MCF 10A (cell line): ENCODE measurements at regions of chr6 and their contacts with region 1.

Region 1: DNA sequence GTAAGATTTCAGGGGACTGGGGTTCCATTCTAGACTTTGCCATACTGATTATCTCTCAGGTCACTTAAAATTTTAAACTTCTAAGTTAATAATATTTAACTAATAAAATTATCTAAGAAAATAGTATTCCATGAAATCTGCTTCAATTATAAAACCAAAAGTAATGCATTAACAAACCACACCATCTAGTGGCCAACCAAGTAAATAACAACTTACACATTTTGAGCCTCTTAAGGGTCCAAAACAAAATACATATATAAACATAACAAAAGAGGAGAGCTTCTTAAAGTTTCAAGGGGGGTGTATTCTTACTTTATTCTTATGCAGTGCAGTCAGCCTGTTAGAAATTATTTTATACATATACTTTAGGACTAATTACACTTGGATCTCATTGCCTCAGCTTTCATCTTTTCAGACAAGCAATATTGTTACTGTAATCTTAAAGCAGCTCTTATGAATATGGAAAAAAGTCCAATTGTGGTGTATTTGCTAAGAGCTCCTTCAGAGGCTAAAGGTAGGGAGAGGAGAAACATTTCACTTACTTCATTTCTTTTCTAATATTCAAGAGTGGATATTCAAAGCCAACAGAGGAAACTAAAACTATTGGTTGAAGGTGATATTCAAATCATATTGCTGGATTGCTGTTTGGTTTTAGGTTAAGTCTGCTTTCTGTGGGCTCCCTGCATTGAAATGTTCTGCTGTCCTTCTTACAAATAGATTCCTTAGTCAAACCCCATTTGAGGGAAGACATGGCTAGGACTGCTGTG is 199.7 kb upstream of the SIM1 start:
- DNase-seq: peak; percentile 44
- H3K4me3 Mint-ChIP-seq: no peak overlapping the region
- H3K27ac Mint-ChIP-seq: no peak overlapping the region
- H3K4me1 Mint-ChIP-seq: peaks cover 11% of the 10 kb centered on the region
- H3K27me3 Mint-ChIP-seq: no peaks in the 10 kb centered on the region
- CTCF ChIP-seq: peak; percentile 50

Region 2: DNA sequence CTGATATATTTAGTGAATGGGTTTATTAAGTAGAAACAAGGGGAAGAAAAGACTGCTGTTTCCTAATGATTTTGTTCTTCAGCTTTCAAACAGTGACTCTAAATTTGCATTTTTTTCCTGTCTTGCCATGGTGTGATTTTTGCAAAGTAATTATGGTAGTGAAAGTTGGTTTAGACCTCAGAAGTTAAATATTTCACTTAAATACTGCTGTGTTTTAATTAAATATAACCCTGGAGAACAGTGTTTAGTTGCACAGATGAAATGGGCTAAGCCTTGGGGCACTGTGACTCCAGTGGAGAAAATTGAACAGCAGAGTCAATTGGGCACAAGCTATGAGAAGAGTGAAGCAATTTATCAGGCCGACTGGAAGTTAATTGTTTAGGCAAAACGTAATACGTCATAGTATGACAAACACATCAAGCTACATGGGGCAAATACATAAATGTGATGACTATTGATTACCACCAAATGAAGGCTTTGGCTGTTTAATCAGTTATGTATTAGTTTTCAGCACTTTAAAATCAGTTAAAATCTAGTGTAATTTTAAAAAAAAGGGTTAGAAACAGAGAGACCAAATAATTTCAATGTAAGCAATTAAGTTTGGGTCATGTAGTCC is 559.2 kb before region 1 on chr6:
- CTCF ChIA-PET with region 1: interaction called, 33 read pairs
- POLR2A ChIA-PET with region 1: no interaction called
- intact Hi-C with region 1: no loop called
- DNase-seq: no peak
- H3K4me3 Mint-ChIP-seq: no peak overlapping the region
- H3K27ac Mint-ChIP-seq: no peak overlapping the region
- H3K4me1 Mint-ChIP-seq: peaks cover 5% of the 10 kb centered on the region
- H3K27me3 Mint-ChIP-seq: no peaks in the 10 kb centered on the region
- CTCF ChIP-seq: no peak

Region 3: DNA sequence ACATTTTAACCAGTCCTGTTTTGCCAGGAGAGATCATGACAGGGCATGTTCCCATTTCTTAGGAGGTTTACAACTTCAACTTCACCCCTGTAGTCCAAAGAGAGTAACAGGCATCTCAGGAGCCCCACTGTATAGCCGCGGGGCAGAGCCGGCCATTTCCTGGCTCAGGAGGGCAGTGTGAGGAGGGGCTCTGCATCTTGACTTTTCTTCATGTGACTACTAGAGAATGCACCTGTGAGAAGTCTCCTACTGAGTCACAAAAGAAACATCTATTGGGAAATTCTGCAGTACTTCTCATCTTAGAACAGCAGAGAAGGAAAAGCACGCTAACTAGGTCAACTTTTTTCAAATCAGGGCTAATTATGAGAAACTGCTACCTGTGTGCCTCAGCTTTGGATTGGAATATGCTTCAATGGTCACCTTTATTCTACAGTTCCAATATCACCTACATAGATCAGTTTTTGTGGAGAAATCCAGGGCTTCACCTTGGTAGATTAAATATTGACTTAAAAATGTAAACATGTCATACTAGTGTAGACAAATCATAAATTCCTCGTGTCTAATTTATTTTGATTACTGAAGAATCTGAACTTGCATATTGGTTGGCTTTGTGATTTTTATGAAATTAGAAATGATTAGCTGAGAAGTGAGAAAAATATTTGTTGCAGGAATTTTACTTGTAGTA is 171.1 kb before region 1 on chr6:
- CTCF ChIA-PET with region 1: no interaction called
- POLR2A ChIA-PET with region 1: no interaction called
- intact Hi-C with region 1: loop called (anchors 5 kb)
- DNase-seq: peak; percentile 61
- H3K4me3 Mint-ChIP-seq: peak overlapping the region; percentile 7
- H3K27ac Mint-ChIP-seq: peak overlapping the region; percentile 84
- H3K4me1 Mint-ChIP-seq: peaks cover 11% of the 10 kb centered on the region
- H3K27me3 Mint-ChIP-seq: no peaks in the 10 kb centered on the region
- CTCF ChIP-seq: no peak

Region 4: DNA sequence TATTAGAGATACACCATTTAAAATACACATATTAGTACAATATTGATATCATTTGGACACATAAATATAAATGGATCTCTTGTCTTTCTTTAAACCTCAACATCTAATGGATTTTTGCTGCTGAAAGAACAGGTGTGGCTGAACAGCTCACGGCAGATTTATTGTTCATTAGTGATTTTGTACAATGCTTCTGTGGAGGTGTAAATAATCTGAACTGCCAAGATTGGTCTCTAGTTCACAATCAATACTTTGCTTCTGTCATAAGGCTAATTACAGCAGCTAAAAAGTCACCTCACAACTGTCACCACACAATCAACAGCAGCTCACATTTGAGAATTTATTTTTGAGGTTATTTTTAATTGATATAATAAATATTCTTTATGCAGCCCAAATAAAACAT is 37.7 kb before region 1 on chr6:
- CTCF ChIA-PET with region 1: interaction called, 10 read pairs
- POLR2A ChIA-PET with region 1: no interaction called
- intact Hi-C with region 1: no loop called
- DNase-seq: no peak
- H3K4me3 Mint-ChIP-seq: no peak overlapping the region
- H3K27ac Mint-ChIP-seq: no peak overlapping the region
- H3K4me1 Mint-ChIP-seq: peaks cover 5% of the 10 kb centered on the region
- H3K27me3 Mint-ChIP-seq: no peaks in the 10 kb centered on the region
- CTCF ChIP-seq: no peak

Region 5: GRCh38 chr6:100704961-100705360 is 40.5 kb after region 1 on chr6:
- CTCF ChIA-PET with region 1: no interaction called
- POLR2A ChIA-PET with region 1: no interaction called
- intact Hi-C with region 1: no loop called
- DNase-seq: no peak
- H3K4me3 Mint-ChIP-seq: no peak overlapping the region
- H3K27ac Mint-ChIP-seq: no peak overlapping the region
- H3K4me1 Mint-ChIP-seq: peaks cover 17% of the 10 kb centered on the region
- H3K27me3 Mint-ChIP-seq: no peaks in the 10 kb centered on the region
- CTCF ChIP-seq: no peak